ENCODE measurements at regions of chr10 and their contacts with region 1.

Region 1: GRCh38 chr10:3785257-3785850 is 345 bp upstream of the KLF6 start:
- DNase-seq: peak; percentile 98
- H3K4me3 ChIP-seq: peak overlapping the region; percentile 97
- H3K27ac ChIP-seq: peak overlapping the region; percentile 100
- H3K4me1 ChIP-seq: peaks cover 31% of the 10 kb centered on the region
- H3K27me3 ChIP-seq: no peaks in the 10 kb centered on the region
- CTCF ChIP-seq: no peak

Region 2: DNA sequence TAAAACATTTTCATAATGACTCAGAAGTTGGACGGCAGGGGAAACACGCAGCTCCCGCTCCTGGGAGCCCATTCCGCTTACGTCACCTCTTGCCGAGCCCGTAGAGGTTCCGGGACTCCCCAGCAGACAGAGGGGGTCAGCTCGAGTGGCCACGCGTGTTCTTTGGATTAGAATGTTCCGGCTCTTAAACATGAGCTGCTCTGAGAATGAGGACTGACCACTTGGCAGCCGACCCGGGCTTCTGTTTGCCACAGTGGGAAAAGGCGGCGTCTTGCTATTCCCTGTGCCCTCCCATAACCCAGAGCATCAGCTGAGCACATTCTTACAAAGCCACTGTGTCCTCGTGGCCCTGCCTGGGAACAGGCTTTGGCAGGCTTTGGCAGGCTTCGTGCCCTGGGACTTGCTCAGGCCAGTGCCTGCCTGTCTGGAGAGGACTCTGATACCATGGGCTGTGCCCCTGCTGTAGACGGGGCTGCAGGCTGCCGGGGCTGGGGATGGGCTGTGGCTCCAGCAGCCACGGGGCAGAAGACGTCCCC is 677.9 kb before region 1 on chr10:
- CTCF ChIA-PET with region 1: no interaction called
- POLR2A ChIA-PET with region 1: no interaction called
- intact Hi-C with region 1: no loop called
- DNase-seq: no peak
- H3K4me3 ChIP-seq: no peak overlapping the region
- H3K27ac ChIP-seq: no peak overlapping the region
- H3K4me1 ChIP-seq: no peaks in the 10 kb centered on the region
- H3K27me3 ChIP-seq: no peaks in the 10 kb centered on the region
- CTCF ChIP-seq: no peak

Region 3: GRCh38 chr10:3239066-3239919 is 546.1 kb before region 1 on chr10:
- CTCF ChIA-PET with region 1: no interaction called
- POLR2A ChIA-PET with region 1: no interaction called
- intact Hi-C with region 1: loop called (anchors 5 kb)
- DNase-seq: peak; percentile 66
- H3K4me3 ChIP-seq: no peak overlapping the region
- H3K27ac ChIP-seq: no peak overlapping the region
- H3K4me1 ChIP-seq: peaks cover 6% of the 10 kb centered on the region
- H3K27me3 ChIP-seq: no peaks in the 10 kb centered on the region
- CTCF ChIP-seq: peak; percentile 91

Region 4: DNA sequence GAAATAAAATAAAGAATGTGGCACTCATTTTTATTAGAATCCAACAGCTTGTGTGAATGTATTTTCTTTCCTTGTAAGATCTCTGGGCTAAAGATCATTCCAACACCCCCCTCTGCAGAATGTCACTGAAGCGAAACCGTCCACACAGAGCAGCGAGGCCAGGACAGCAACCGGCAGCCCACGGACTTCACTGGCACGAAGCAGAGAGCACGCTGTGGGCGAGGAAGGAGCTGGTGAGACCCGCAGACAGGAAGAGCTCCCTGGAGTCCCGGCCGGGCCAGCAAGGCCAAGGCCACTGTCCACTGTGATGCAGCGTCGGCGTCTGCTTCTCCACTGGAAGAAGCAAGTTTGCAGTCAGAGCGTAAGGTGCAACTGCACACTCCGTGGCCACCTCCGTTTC is 200.0 kb before region 1 on chr10:
- CTCF ChIA-PET with region 1: no interaction called
- POLR2A ChIA-PET with region 1: no interaction called
- intact Hi-C with region 1: no loop called
- DNase-seq: no peak
- H3K4me3 ChIP-seq: no peak overlapping the region
- H3K27ac ChIP-seq: no peak overlapping the region
- H3K4me1 ChIP-seq: peaks cover 13% of the 10 kb centered on the region
- H3K27me3 ChIP-seq: no peaks in the 10 kb centered on the region
- CTCF ChIP-seq: no peak

Region 5: GRCh38 chr10:3668276-3668965 is 116.9 kb before region 1 on chr10:
- CTCF ChIA-PET with region 1: no interaction called
- POLR2A ChIA-PET with region 1: no interaction called
- intact Hi-C with region 1: loop called (anchors 5 kb)
- DNase-seq: peak; percentile 72
- H3K4me3 ChIP-seq: no peak overlapping the region
- H3K27ac ChIP-seq: peak overlapping the region; percentile 68
- H3K4me1 ChIP-seq: peaks cover 44% of the 10 kb centered on the region
- H3K27me3 ChIP-seq: no peaks in the 10 kb centered on the region
- CTCF ChIP-seq: no peak

Region 6: GRCh38 chr10:3805791-3806461 is 20.6 kb after region 1 on chr10:
- CTCF ChIA-PET with region 1: no interaction called
- POLR2A ChIA-PET with region 1: no interaction called
- intact Hi-C with region 1: loop called (anchors 1 kb)
- DNase-seq: peak; percentile 91
- H3K4me3 ChIP-seq: no peak overlapping the region
- H3K27ac ChIP-seq: peak overlapping the region; percentile 81
- H3K4me1 ChIP-seq: peaks cover 67% of the 10 kb centered on the region
- H3K27me3 ChIP-seq: no peaks in the 10 kb centered on the region
- CTCF ChIP-seq: no peak

Region 7: DNA sequence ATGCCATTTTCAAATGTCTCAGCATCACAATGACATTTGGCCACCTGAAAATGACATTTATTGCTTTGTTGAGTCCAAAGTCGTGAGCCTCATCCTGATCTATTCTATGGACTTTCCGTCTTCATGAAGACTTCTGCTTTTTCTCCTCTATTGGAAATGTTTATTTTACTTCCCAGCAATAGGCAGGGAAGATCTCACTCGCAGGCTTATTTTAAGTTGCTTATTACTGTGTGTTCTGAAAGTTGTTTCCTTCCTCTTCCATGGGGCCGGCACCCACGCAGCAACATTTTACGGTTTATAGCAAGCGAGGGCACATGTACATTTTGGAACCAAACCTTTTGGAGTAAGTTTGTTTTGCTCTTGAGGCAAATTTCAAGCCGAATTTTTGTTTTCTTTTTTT is 220.7 kb after region 1 on chr10:
- CTCF ChIA-PET with region 1: no interaction called
- POLR2A ChIA-PET with region 1: no interaction called
- intact Hi-C with region 1: no loop called
- DNase-seq: no peak
- H3K4me3 ChIP-seq: no peak overlapping the region
- H3K27ac ChIP-seq: no peak overlapping the region
- H3K4me1 ChIP-seq: no peaks in the 10 kb centered on the region
- H3K27me3 ChIP-seq: no peaks in the 10 kb centered on the region
- CTCF ChIP-seq: no peak

Region 8: GRCh38 chr10:4051011-4051640 is 265.8 kb after region 1 on chr10:
- CTCF ChIA-PET with region 1: no interaction called
- POLR2A ChIA-PET with region 1: no interaction called
- intact Hi-C with region 1: loop called (anchors 10 kb)
- DNase-seq: no peak
- H3K4me3 ChIP-seq: no peak overlapping the region
- H3K27ac ChIP-seq: no peak overlapping the region
- H3K4me1 ChIP-seq: no peaks in the 10 kb centered on the region
- H3K27me3 ChIP-seq: peaks cover 63% of the 10 kb centered on the region
- CTCF ChIP-seq: no peak

Measured in A673 (cell line).